B cell (primary cell): ENCODE measurements at regions of chr13 and their contacts with region 1.

Region 1: DNA sequence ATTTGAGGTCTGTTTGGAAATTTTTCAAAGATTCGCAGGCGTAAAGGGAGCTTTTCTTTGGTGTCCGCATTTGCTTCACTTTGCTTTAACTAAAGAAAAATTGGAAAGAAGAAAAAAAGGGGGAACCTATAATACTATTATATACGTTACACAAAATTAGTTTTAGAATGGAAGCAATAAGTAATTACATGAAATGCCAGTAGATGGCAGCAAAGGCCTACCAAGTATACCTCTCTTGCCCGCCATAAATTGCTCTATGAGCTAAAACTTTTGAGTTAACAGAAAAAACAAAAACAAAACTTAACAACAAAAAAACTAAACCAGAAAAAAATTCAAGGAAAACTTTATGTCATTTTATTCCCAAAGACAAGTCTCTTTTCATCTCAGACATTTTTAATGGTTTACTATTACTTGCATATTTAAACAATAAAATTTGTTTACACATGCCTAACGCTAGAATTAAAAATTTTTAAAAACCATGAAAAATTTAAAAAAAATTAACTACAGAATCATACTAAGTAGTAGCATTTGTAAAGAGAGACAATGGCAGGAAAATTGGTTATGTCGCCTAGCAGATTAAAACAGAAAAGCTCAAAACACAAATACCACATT is 271.4 kb downstream of the NALCN start:
- DNase-seq: peak; percentile 54
- ATAC-seq: no peak
- H3K4me3 ChIP-seq: no peak overlapping the region
- H3K4me3 Mint-ChIP-seq: no peak overlapping the region
- H3K27ac ChIP-seq: no peak overlapping the region
- H3K27ac Mint-ChIP-seq: no peak overlapping the region
- H3K4me1 ChIP-seq: no peaks in the 10 kb centered on the region
- H3K4me1 Mint-ChIP-seq: peaks cover 2% of the 10 kb centered on the region
- H3K27me3 ChIP-seq: peaks cover 0 to 4% (median 1%) of the 10 kb centered on the region in 4 experiments
- H3K27me3 Mint-ChIP-seq: peaks cover 22% of the 10 kb centered on the region
- CTCF ChIP-seq: peak; percentile 93

Region 2: GRCh38 chr13:101127741-101128353 is 17.1 kb before region 1 on chr13:
- CTCF ChIA-PET with region 1: interaction called, 11 read pairs
- POLR2A ChIA-PET with region 1: no interaction called
- intact Hi-C with region 1: no loop called
- DNase-seq: peak; percentile 31
- ATAC-seq: no peak
- H3K4me3 ChIP-seq: no peak overlapping the region
- H3K4me3 Mint-ChIP-seq: no peak overlapping the region
- H3K27ac ChIP-seq: no peak overlapping the region
- H3K27ac Mint-ChIP-seq: no peak overlapping the region
- H3K4me1 ChIP-seq: no peaks in the 10 kb centered on the region
- H3K4me1 Mint-ChIP-seq: no peaks in the 10 kb centered on the region
- H3K27me3 ChIP-seq: no peaks in the 10 kb centered on the region
- H3K27me3 Mint-ChIP-seq: peaks cover 11% of the 10 kb centered on the region
- CTCF ChIP-seq: peak; percentile 64

Region 3: GRCh38 chr13:101155920-101156319 is 11.0 kb after region 1 on chr13:
- CTCF ChIA-PET with region 1: interaction called, 30 read pairs
- POLR2A ChIA-PET with region 1: no interaction called
- intact Hi-C with region 1: no loop called
- DNase-seq: no peak
- ATAC-seq: no peak
- H3K4me3 ChIP-seq: no peak overlapping the region
- H3K4me3 Mint-ChIP-seq: no peak overlapping the region
- H3K27ac ChIP-seq: no peak overlapping the region
- H3K27ac Mint-ChIP-seq: no peak overlapping the region
- H3K4me1 ChIP-seq: peaks cover 2% of the 10 kb centered on the region in 2 donors
- H3K4me1 Mint-ChIP-seq: peaks cover 4% of the 10 kb centered on the region
- H3K27me3 ChIP-seq: no peaks in the 10 kb centered on the region
- H3K27me3 Mint-ChIP-seq: peaks cover 7% of the 10 kb centered on the region
- CTCF ChIP-seq: no peak

Region 4: DNA sequence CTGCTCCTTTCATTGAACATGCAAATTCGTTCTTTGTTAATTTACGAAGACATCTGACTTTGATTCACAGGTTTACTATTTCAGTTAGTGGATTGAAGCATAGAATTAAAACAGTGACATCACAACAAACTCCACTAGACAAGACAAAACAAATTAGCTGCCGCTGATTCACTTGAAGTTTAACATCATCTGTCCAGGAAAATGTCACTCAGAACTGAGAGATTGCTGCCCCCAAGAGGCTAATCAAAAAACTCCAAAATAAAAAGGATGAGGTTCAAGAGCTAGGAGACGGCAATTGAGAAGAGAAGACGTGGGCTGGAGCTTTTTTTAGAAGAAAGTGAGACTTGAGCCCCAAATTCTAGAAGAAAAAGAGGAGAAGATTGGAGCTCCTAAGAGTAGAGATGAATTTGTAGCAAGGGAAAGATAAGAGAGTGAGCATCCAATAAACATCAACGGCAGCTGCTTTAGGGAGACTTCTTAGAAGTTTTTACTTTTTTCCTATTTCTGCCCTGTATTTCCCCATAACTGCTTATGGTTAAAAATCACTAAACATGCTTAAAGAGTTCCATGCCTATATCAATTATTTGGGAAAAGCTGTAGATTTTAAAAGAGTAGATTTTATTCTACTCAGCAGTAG is 1411.1 kb after region 1 on chr13:
- CTCF ChIA-PET with region 1: interaction called, 37 read pairs
- POLR2A ChIA-PET with region 1: no interaction called
- intact Hi-C with region 1: no loop called
- DNase-seq: peak; percentile 27
- ATAC-seq: no peak
- H3K4me3 ChIP-seq: no peak overlapping the region
- H3K4me3 Mint-ChIP-seq: no peak overlapping the region
- H3K27ac ChIP-seq: no peak overlapping the region
- H3K27ac Mint-ChIP-seq: no peak overlapping the region
- H3K4me1 ChIP-seq: no peaks in the 10 kb centered on the region
- H3K4me1 Mint-ChIP-seq: no peaks in the 10 kb centered on the region
- H3K27me3 ChIP-seq: peaks cover 0 to 3% (median 0%) of the 10 kb centered on the region in 4 experiments
- H3K27me3 Mint-ChIP-seq: peaks cover 10% of the 10 kb centered on the region
- CTCF ChIP-seq: peak; percentile 51